Gastrocnemius medialis (tissue), 4 donors: ENCODE measurements at regions of chr21 and their contacts with region 1.

Region 1: GRCh38 chr21:42107881-42108553 is 36.9 kb downstream of the UMODL1 start:
- DNase-seq: peak; percentile 23 to 75
- ATAC-seq: peak; percentile 80 to 91
- H3K4me3 ChIP-seq: no peak overlapping the region
- H3K27ac ChIP-seq: peak overlapping the region in 2 of 4 donors; percentile 34 to 57
- H3K4me1 ChIP-seq: peaks cover 0 to 13% of the 10 kb centered on the region in 2 donors
- H3K27me3 ChIP-seq: peaks cover 0 to 5% (median 0%) of the 10 kb centered on the region in 3 donors
- CTCF ChIP-seq: peak; percentile 19 to 66 (median 52)
- POLR2A ChIP-seq: no peak

Region 2: GRCh38 chr21:41612674-41613532 is 495.1 kb before region 1 on chr21:
- in situ Hi-C with region 1: loop called in 1 of 4 experiments (anchors 25 kb)
- intact Hi-C with region 1: loop called (anchors 10 kb)
- DNase-seq: peak; percentile 47 to 72
- ATAC-seq: peak; percentile 75 to 77
- H3K4me3 ChIP-seq: no peak overlapping the region
- H3K27ac ChIP-seq: peak overlapping the region in 1 of 4 donors; percentile 11
- H3K4me1 ChIP-seq: peaks cover 5 to 12% of the 10 kb centered on the region in 2 donors
- H3K27me3 ChIP-seq: peaks cover 0 to 8% (median 5%) of the 10 kb centered on the region in 3 donors
- CTCF ChIP-seq: peak; percentile 33 to 68 (median 54)
- POLR2A ChIP-seq: no peak

Region 3: GRCh38 chr21:41816220-41817165 is 291.5 kb before region 1 on chr21:
- in situ Hi-C with region 1: loop called (anchors 10 to 25 kb)
- intact Hi-C with region 1: no loop called
- DNase-seq: peak; percentile 18 to 33
- ATAC-seq: peak; percentile 42 to 62
- H3K4me3 ChIP-seq: no peak overlapping the region
- H3K27ac ChIP-seq: no peak overlapping the region
- H3K4me1 ChIP-seq: no peaks in the 10 kb centered on the region
- H3K27me3 ChIP-seq: no peaks in the 10 kb centered on the region
- CTCF ChIP-seq: peak; percentile 65 to 76 (median 70)
- POLR2A ChIP-seq: no peak

Region 4: DNA sequence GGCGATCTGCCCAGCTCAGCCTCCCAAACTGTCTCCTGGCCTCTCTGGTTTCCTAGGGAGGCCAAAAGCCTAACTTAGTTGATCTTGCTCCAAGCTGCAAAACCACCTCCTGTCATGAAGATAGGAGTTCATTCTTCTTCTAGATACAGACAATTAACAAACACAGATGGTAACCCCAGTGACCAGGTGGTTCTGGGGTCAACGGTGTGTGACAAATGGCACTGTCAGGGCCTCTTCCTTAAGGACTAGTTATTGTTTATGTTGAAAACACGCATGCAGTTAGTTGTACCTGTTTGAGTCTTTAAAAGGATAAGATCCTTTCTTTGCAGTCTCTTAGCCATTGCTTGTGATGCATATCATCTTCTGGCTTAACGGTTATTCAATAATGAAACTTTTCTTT is 41.5 kb before region 1 on chr21:
- in situ Hi-C with region 1: no loop called
- intact Hi-C with region 1: loop called (anchors 5 kb)
- DNase-seq: no peak
- ATAC-seq: no peak
- H3K4me3 ChIP-seq: no peak overlapping the region
- H3K27ac ChIP-seq: no peak overlapping the region
- H3K4me1 ChIP-seq: no peaks in the 10 kb centered on the region
- H3K27me3 ChIP-seq: no peaks in the 10 kb centered on the region
- CTCF ChIP-seq: no peak
- POLR2A ChIP-seq: no peak

Region 5: GRCh38 chr21:42080788-42081083 is 27.3 kb before region 1 on chr21:
- in situ Hi-C with region 1: no loop called
- intact Hi-C with region 1: loop called (anchors 1 kb)
- DNase-seq: peak; percentile 29 to 35
- ATAC-seq: peak; percentile 84 to 95
- H3K4me3 ChIP-seq: no peak overlapping the region
- H3K27ac ChIP-seq: peak overlapping the region in 1 of 4 donors; percentile 57
- H3K4me1 ChIP-seq: peaks cover 4 to 9% of the 10 kb centered on the region in 2 donors
- H3K27me3 ChIP-seq: no peaks in the 10 kb centered on the region
- CTCF ChIP-seq: no peak
- POLR2A ChIP-seq: no peak

Region 6: GRCh38 chr21:42176859-42177258 is 68.8 kb after region 1 on chr21:
- in situ Hi-C with region 1: no loop called
- intact Hi-C with region 1: no loop called
- DNase-seq: no peak
- ATAC-seq: no peak
- H3K4me3 ChIP-seq: no peak overlapping the region
- H3K27ac ChIP-seq: no peak overlapping the region
- H3K4me1 ChIP-seq: no peaks in the 10 kb centered on the region
- H3K27me3 ChIP-seq: no peaks in the 10 kb centered on the region
- CTCF ChIP-seq: no peak
- POLR2A ChIP-seq: no peak

Region 7: GRCh38 chr21:42187976-42188653 is 80.1 kb after region 1 on chr21:
- in situ Hi-C with region 1: no loop called
- intact Hi-C with region 1: no loop called
- DNase-seq: peak; percentile 10 to 38
- ATAC-seq: peak; percentile 51 to 60
- H3K4me3 ChIP-seq: no peak overlapping the region
- H3K27ac ChIP-seq: peak overlapping the region in 3 of 4 donors; percentile 29 to 57 (median 47)
- H3K4me1 ChIP-seq: peaks cover 0 to 7% of the 10 kb centered on the region in 2 donors
- H3K27me3 ChIP-seq: no peaks in the 10 kb centered on the region
- CTCF ChIP-seq: no peak
- POLR2A ChIP-seq: no peak

Region 8: DNA sequence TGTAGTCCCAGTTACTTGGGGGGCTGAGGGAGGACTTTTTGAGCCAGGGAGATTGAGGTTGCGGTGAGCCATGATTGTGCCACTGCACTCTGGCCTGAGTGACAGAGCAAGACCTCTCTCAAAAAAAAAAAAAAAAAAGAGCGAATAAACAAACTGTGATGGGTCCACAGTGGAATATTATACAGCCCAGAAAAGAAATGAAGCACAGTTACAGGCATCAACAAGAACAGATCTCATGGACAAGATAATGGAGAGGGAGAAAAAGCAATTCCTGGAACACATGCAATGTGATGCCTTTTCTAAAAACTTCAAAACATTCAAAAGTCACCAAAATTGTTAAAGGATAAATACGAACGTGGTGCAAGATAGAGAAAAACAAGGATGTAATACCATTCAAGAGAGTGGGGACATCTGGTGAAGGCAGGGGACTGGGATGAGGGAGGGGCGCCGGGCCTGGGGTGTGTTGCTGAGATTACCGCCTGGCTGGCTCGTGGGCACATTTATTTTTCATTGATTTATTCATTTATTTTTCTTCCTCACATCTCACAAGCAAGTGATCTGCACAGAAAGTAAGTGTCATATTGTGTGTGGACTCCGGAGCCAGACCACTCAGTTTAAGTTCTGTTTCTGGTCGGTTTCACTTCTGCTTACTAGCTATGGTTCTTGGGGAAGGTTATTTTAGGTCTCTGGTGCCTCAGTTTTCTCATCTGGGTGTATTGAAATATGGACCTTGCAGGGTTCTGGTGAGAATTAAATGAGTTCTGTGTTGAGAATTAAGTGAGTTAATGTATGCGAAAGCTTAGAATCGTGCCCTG is 141.0 kb after region 1 on chr21:
- in situ Hi-C with region 1: no loop called
- intact Hi-C with region 1: no loop called
- DNase-seq: no peak
- ATAC-seq: no peak
- H3K4me3 ChIP-seq: no peak overlapping the region
- H3K27ac ChIP-seq: no peak overlapping the region
- H3K4me1 ChIP-seq: peaks cover 0 to 12% of the 10 kb centered on the region in 2 donors
- H3K27me3 ChIP-seq: no peaks in the 10 kb centered on the region
- CTCF ChIP-seq: no peak
- POLR2A ChIP-seq: no peak